Activated B cell treated with CpG ODN at 0.5 μM for 24 hours (primary cell): ENCODE measurements at regions of chr5 and their contacts with region 1.

Region 1: DNA sequence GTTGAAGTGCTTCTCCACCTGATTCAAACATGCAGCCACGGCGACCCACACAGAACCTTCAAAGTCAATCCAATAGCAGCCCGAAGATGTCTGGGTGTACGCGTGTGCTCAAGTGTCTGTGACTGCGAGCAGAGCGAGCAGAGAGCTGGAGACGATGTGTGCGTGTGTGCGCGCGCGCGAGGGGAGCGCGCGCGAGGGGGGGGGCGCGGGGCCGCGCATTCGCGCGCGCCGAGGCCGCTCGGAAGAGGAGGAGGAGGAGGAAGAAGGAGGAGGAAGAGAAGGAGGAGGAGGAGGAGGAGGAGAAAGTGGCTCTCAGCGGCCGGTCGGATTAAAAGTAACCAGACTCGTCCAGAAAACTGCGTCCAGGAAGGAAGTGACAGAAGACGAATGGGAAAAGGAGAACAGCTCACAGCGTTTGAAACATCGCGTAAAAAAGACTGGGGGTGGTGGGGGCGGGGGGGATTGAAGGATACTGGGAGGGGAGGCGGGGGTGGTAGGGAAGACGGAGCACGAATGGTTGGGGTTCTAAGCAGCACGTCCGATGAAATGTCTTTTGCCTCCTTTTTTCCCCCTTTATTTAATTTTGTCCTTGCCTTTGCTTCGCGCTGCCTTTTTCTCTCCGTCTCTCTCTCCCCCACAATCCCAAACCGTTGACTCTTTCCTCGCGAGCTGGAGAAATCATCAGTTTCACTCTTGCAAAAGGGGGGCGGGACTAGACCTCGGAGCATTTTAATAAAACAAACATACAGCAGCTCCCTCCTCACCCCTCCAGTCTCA is at the start of gene MEF2C:
- DNase-seq: peak; percentile 62
- ATAC-seq: peak; percentile 57
- H3K4me3 Mint-ChIP-seq: peak within 1 kb of the TSS; percentile 99
- H3K27ac Mint-ChIP-seq: peak within 1 kb of the TSS; percentile 98
- H3K4me1 Mint-ChIP-seq: peaks cover 46% of the 10 kb centered on the region
- H3K27me3 Mint-ChIP-seq: no peaks in the 10 kb centered on the region
- CTCF ChIP-seq: no peak
- total RNA-seq, gene MEF2C: 348 and 359 TPM in 2 replicates

Region 2: GRCh38 chr5:88736494-88736893 is 146.8 kb before region 1 on chr5:
- CTCF ChIA-PET with region 1: interaction called, 8 read pairs
- POLR2A ChIA-PET with region 1: interaction called, 242 read pairs
- intact Hi-C with region 1: loop called (anchors 1 kb)
- DNase-seq: no peak
- ATAC-seq: peak; percentile 43
- H3K4me3 Mint-ChIP-seq: peak overlapping the region; percentile 42
- H3K27ac Mint-ChIP-seq: peak overlapping the region; percentile 86
- H3K4me1 Mint-ChIP-seq: peaks cover 90% of the 10 kb centered on the region
- H3K27me3 Mint-ChIP-seq: no peaks in the 10 kb centered on the region
- CTCF ChIP-seq: no peak

Region 3: DNA sequence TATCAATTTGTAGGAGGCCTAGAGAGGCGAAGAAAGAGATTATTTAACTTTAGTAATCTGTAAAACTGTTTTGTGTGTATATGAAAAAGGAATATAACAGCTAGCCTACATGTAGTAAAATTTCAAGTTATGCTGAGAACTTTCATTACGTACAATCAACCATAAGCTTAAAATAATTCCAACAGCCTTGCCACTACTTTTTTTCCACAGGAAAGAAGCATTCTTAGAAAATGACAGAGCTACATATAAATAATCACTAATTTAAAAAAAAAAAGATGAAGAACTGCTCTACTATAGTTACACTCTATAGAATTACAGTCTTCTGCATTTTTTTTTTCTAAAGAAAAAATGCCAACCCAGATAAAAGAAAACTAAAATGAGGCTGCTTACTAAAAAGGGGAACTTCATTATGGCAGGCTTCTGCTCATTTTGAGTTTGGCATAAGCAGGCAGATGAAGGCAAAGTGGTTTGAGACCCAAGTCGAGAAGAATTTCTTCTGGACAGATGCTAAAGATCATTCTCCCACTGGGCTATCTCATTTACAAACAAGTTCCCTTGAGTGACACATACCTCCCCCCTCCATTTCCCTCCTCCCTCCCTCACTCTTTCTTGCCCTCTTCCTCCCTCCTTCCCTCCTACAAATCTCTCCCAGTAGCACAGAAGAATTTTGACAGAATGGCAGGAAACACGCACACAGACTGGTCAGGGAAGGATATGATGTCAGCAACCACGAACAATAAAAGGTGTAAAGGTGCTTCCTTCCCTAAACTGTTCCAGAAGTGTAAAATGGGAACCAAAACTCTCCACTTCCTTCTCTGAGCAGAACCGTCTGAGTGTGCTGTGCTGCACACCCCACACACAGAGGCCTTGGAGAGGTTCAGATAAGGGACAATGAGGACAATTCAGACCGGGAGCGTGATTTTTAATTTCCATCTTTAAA is 56.3 kb before region 1 on chr5:
- CTCF ChIA-PET with region 1: interaction called, 4 read pairs
- POLR2A ChIA-PET with region 1: interaction called, 200 read pairs
- intact Hi-C with region 1: loop called (anchors 1 kb)
- DNase-seq: peak; percentile 31
- ATAC-seq: peak; percentile 77
- H3K4me3 Mint-ChIP-seq: peak overlapping the region; percentile 72
- H3K27ac Mint-ChIP-seq: peak overlapping the region; percentile 91
- H3K4me1 Mint-ChIP-seq: peaks cover 93% of the 10 kb centered on the region
- H3K27me3 Mint-ChIP-seq: no peaks in the 10 kb centered on the region
- CTCF ChIP-seq: no peak

Region 4: DNA sequence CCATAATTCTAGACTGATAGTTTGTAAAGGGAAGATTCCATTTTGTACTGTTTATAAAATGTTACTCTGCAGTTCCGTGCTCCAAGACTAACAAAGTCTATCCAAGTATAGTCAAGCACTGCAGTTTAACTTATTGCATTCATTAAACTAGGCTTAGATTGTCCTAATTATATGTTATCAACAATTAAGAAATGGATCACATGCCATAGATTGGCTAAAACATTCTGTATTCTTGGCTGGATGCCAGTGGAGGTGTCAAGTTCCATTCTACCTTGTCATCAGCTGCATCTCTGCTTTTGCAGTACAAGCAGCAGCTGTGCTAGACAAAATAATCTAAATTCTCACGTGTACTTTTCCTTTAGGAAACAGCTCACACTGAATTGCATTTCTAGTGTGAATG is 69.1 kb after region 1 on chr5:
- CTCF ChIA-PET with region 1: no interaction called
- POLR2A ChIA-PET with region 1: no interaction called
- intact Hi-C with region 1: no loop called
- DNase-seq: no peak
- ATAC-seq: no peak
- H3K4me3 Mint-ChIP-seq: no peak overlapping the region
- H3K27ac Mint-ChIP-seq: no peak overlapping the region
- H3K4me1 Mint-ChIP-seq: peaks cover 21% of the 10 kb centered on the region
- H3K27me3 Mint-ChIP-seq: no peaks in the 10 kb centered on the region
- CTCF ChIP-seq: no peak

Region 5: GRCh38 chr5:89081360-89081759 is 198.1 kb after region 1 on chr5:
- CTCF ChIA-PET with region 1: no interaction called
- POLR2A ChIA-PET with region 1: interaction called, 6 read pairs
- intact Hi-C with region 1: loop called (anchors 2 kb)
- DNase-seq: no peak
- ATAC-seq: peak; percentile 75
- H3K4me3 Mint-ChIP-seq: peak overlapping the region; percentile 35
- H3K27ac Mint-ChIP-seq: peak overlapping the region; percentile 31
- H3K4me1 Mint-ChIP-seq: peaks cover 22% of the 10 kb centered on the region
- H3K27me3 Mint-ChIP-seq: no peaks in the 10 kb centered on the region
- CTCF ChIP-seq: no peak

Region 6: GRCh38 chr5:89343666-89344065 is 460.4 kb after region 1 on chr5:
- CTCF ChIA-PET with region 1: no interaction called
- POLR2A ChIA-PET with region 1: interaction called, 25 read pairs
- intact Hi-C with region 1: loop called (anchors 2 kb)
- DNase-seq: peak; percentile 29
- ATAC-seq: peak; percentile 79
- H3K4me3 Mint-ChIP-seq: peak overlapping the region; percentile 42
- H3K27ac Mint-ChIP-seq: peak overlapping the region; percentile 80
- H3K4me1 Mint-ChIP-seq: peaks cover 49% of the 10 kb centered on the region
- H3K27me3 Mint-ChIP-seq: no peaks in the 10 kb centered on the region
- CTCF ChIP-seq: no peak

Region 7: DNA sequence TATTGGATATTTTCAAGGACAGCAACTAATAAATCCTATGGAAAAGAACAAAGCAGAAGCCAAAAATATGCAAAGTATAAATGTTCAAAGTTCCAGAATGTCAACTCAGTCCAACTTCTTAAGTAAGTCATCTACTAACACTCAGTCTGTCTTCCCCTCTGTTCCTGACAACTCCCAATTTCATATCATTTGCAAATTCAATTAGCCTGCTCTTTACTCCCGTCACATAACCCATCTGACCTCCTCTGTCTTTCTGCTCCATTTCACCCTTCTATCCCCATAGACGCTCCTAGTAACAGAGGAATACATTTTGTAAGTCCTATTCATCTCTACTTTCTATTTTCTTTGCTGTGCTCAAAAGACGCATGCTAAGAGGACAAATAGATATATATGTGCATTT is 659.5 kb after region 1 on chr5:
- CTCF ChIA-PET with region 1: no interaction called
- POLR2A ChIA-PET with region 1: no interaction called
- intact Hi-C with region 1: loop called (anchors 5 kb)
- DNase-seq: no peak
- ATAC-seq: no peak
- H3K4me3 Mint-ChIP-seq: no peak overlapping the region
- H3K27ac Mint-ChIP-seq: no peak overlapping the region
- H3K4me1 Mint-ChIP-seq: peaks cover 11% of the 10 kb centered on the region
- H3K27me3 Mint-ChIP-seq: no peaks in the 10 kb centered on the region
- CTCF ChIP-seq: no peak

Region 8: DNA sequence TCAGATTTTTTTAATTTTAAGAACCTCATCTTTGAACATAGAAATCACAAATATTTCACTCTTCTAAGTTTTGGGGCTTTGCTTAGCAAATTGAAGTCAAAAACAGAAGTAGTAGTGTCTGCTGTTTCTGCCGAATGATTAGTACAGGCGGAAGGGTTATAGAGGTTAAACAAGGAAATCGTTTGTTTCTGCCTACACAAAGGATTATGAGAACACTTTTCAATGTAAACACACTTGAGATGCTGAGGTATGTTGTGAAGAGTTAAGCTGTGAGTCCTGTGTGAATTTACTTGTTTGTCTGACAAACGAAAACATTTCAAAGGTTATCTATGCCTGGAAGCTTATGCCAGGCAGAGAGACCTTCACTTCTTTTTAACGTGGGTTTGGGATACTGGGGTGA is 1301.5 kb after region 1 on chr5:
- CTCF ChIA-PET with region 1: no interaction called
- POLR2A ChIA-PET with region 1: no interaction called
- intact Hi-C with region 1: loop called (anchors 10 kb)
- DNase-seq: no peak
- ATAC-seq: no peak
- H3K4me3 Mint-ChIP-seq: no peak overlapping the region
- H3K27ac Mint-ChIP-seq: no peak overlapping the region
- H3K4me1 Mint-ChIP-seq: peaks cover 3% of the 10 kb centered on the region
- H3K27me3 Mint-ChIP-seq: peaks cover 4% of the 10 kb centered on the region
- CTCF ChIP-seq: no peak